A673 (cell line): ENCODE measurements at regions of chr9 and their contacts with region 1.

Region 1: DNA sequence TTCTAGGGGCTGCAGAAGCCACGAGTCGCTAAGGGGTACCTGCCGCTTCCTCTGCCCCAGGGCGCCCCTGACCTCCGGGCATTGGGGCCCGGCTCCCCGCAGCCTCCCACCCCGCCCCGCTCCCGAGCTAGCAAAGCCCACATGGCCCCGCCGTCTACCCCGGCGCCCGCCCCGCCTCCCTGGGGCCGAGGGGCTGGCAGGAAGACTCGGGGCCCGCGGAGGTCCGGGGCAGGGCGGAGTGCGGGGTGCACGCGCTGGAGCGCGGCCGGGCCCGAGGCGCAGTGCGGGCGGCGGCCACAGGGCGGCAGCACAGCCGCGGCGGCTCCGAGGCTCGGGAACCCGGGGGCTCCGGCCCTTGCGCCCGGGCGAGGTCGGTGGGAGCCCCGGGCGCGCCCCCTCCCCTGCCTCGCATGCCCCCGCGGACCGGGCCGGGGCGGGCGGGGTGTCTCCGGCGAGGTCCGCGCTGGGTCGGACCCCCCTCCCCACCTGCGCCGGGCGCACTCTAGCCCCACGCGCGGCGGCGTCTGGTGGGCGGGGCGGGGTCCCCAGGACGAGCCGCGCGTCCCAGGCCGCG is 6.7 kb downstream of the NRARP start:
- DNase-seq: peak; percentile 54
- H3K4me3 ChIP-seq: peak overlapping the region; percentile 42
- H3K27ac ChIP-seq: no peak overlapping the region
- H3K4me1 ChIP-seq: peaks cover 12% of the 10 kb centered on the region
- H3K27me3 ChIP-seq: no peaks in the 10 kb centered on the region
- CTCF ChIP-seq: no peak

Region 2: DNA sequence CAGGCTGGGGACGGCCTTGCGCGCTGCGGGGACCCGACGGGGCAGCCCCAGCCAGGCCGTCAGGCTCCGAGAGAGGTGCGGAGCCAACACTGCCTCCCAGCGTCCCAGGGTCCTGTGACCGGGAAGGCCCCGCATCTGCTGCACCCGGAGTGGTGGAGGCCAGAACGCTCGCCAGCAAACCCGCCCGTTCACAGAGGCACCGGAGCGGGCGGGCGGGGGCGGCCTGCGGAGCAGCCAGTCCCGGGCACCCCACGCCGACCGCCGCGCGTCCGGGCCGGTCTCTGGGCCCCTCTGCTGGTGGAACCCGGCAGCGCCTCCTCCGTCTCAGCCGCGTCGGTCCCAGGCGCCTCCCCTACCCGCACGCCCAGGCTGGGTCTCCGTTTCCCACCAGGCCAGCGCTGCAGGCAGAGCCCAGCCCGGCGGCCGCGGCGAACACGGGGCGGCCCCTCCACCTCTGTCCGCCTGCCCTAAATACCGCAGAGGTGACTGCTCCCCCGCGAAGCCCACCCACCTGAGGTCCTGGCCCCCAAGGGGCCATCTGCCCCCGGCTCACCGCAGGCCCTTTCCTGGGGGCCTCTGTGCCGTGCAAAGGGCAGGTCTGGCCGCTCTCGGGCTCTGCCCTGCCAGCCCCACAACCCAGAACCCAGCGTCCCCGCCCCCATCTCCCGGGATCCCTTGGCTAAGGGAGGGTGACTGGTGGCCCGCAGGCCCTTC is 111.7 kb after region 1 on chr9:
- CTCF ChIA-PET with region 1: no interaction called
- POLR2A ChIA-PET with region 1: no interaction called
- intact Hi-C with region 1: loop called (anchors 2 kb)
- DNase-seq: peak; percentile 77
- H3K4me3 ChIP-seq: peak overlapping the region; percentile 43
- H3K27ac ChIP-seq: no peak overlapping the region
- H3K4me1 ChIP-seq: peaks cover 23% of the 10 kb centered on the region
- H3K27me3 ChIP-seq: no peaks in the 10 kb centered on the region
- CTCF ChIP-seq: peak; percentile 60; the same call in 1 of the 2 replicates

Region 3: DNA sequence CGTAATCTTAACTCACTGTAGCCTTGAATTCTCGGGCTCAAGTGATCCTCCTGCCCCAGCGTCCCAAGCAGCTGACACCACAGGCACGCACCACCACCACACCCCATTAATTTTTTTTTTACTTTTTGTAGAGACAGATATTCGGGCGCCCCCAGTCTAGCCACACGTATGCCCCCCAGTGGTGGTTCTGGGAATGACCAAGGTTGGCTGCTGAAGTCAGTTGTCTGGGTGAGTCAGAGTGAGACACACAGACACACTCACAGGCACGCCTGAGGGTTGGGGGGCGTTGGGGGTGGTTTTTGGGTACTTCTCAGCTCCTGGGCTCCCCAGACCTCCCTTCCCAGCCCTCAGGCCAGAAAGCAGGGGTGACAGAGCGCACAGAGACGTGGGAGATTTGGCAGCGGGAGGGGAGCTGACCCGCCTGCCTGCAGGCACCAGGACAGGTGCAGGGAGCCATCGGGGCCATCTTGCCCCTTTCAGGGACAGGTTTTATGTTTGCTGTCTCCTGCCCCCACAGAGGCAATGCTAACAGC is 150.0 kb after region 1 on chr9:
- CTCF ChIA-PET with region 1: no interaction called
- POLR2A ChIA-PET with region 1: no interaction called
- intact Hi-C with region 1: loop called (anchors 2 kb)
- DNase-seq: peak; percentile 79
- H3K4me3 ChIP-seq: no peak overlapping the region
- H3K27ac ChIP-seq: no peak overlapping the region
- H3K4me1 ChIP-seq: peaks cover 6% of the 10 kb centered on the region
- H3K27me3 ChIP-seq: no peaks in the 10 kb centered on the region
- CTCF ChIP-seq: peak; percentile 91